ENCODE measurements at regions of chr6 and their contacts with region 1.

Region 1: DNA sequence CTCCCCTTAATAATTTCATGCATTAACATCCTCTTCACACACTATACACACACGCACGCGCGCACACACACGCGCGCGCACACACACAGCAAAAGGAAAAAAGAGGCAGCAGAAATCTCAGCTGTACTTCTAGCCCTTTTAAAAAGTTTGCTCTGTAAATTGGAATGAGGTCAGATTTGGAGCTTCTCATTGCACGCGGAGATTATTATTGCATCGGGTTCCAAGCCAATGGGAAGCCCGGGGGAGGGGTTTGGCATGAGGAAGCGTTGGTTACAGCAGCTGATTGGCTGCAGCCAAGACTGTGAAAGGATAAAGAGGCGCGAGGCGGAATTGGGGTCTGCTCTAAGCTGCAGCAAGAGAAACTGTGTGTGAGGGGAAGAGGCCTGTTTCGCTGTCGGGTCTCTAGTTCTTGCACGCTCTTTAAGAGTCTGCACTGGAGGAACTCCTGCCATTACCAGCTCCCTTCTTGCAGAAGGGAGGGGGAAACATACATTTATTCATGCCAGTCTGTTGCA is at the start of gene SOX4:
- DNase-seq: peak; percentile 87 to 97
- ATAC-seq: peak; percentile 79 to 90 (median 87)
- H3K4me3 ChIP-seq: peak within 1 kb of the TSS; percentile 62 to 88 (median 80)
- H3K27ac ChIP-seq: peak within 1 kb of the TSS; percentile 59 to 96 (median 90)
- H3K4me1 ChIP-seq: peaks cover 0 to 39% (median 15%) of the 10 kb centered on the region in 9 donors
- H3K27me3 ChIP-seq: no peaks in the 10 kb centered on the region
- CTCF ChIP-seq: no peak
- total RNA-seq, gene SOX4: 3.1 to 19.1 (median 7.7) TPM

Region 2: GRCh38 chr6:20564269-20564668 is 1029.2 kb before region 1 on chr6:
- intact Hi-C with region 1: loop called in 9 of 10 experiments (anchors 2 to 5 kb)
- DNase-seq: no peak
- ATAC-seq: no peak
- H3K4me3 ChIP-seq: no peak overlapping the region
- H3K27ac ChIP-seq: no peak overlapping the region
- H3K4me1 ChIP-seq: peaks cover 0 to 8% (median 5%) of the 10 kb centered on the region in 9 donors
- H3K27me3 ChIP-seq: no peaks in the 10 kb centered on the region
- CTCF ChIP-seq: peak; percentile 14 to 80 (median 70)

Region 3: GRCh38 chr6:20877008-20877937 is 716.2 kb before region 1 on chr6:
- intact Hi-C with region 1: loop called in 4 of 10 experiments (anchors 5 to 10 kb)
- DNase-seq: no peak
- ATAC-seq: peak in 7 of 8 donors; percentile 17 to 88 (median 74)
- H3K4me3 ChIP-seq: no peak overlapping the region
- H3K27ac ChIP-seq: peak overlapping the region in 1 of 10 donors; percentile 24
- H3K4me1 ChIP-seq: peaks cover 0 to 21% (median 0%) of the 10 kb centered on the region in 9 donors
- H3K27me3 ChIP-seq: no peaks in the 10 kb centered on the region
- CTCF ChIP-seq: no peak

Region 4: GRCh38 chr6:21748343-21749056 is 155.0 kb after region 1 on chr6:
- intact Hi-C with region 1: loop called in 1 of 10 experiments (anchors 10 kb)
- DNase-seq: no peak
- ATAC-seq: no peak
- H3K4me3 ChIP-seq: no peak overlapping the region
- H3K27ac ChIP-seq: no peak overlapping the region
- H3K4me1 ChIP-seq: peaks cover 0 to 5% (median 1%) of the 10 kb centered on the region in 9 donors
- H3K27me3 ChIP-seq: no peaks in the 10 kb centered on the region
- CTCF ChIP-seq: no peak

Region 5: DNA sequence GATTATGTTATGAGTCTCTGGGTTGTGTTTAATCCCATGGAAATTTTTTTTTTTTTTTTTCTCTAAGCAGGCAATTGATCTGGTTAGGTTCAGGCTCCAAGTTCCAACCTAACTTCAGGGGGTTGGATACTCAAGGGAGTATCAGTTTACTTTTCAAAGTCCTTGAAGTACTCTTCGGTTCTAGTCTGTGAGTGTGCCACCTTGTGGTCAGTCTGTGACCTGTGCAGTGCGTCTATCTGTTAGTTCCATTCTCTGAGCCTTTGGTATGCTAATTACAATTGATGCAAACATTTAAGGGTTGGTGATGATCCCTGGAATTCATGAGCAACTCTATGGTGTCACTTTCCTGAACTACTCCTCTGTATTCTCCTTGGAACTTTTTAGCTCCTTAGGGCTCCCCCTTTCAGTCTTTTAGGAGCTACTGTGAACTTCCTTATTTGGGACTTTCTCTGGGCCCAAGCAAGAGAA is 342.1 kb after region 1 on chr6:
- intact Hi-C with region 1: loop called in 7 of 10 experiments (anchors 5 to 10 kb)
- DNase-seq: peak in 1 of 2 donors; percentile 15
- ATAC-seq: peak in 3 of 8 donors; percentile 31 to 41 (median 31)
- H3K4me3 ChIP-seq: no peak overlapping the region
- H3K27ac ChIP-seq: no peak overlapping the region
- H3K4me1 ChIP-seq: peaks cover 0 to 5% (median 0%) of the 10 kb centered on the region in 9 donors
- H3K27me3 ChIP-seq: no peaks in the 10 kb centered on the region
- CTCF ChIP-seq: peak; percentile 15 to 70 (median 58)

Region 6: GRCh38 chr6:22737331-22737730 is 1143.9 kb after region 1 on chr6:
- intact Hi-C with region 1: loop called in 1 of 10 experiments (anchors 10 kb)
- DNase-seq: peak in 1 of 2 donors; percentile 24
- ATAC-seq: peak in 4 of 8 donors; percentile 42 to 68 (median 52)
- H3K4me3 ChIP-seq: no peak overlapping the region
- H3K27ac ChIP-seq: no peak overlapping the region
- H3K4me1 ChIP-seq: peaks cover 0 to 6% (median 0%) of the 10 kb centered on the region in 9 donors
- H3K27me3 ChIP-seq: no peaks in the 10 kb centered on the region
- CTCF ChIP-seq: peak; percentile 23 to 70 (median 55)

Region 7: GRCh38 chr6:23446394-23447046 is 1853.1 kb after region 1 on chr6:
- intact Hi-C with region 1: loop called in 3 of 10 experiments (anchors 5 to 10 kb)
- DNase-seq: peak in 1 of 2 donors; percentile 7
- ATAC-seq: peak in 7 of 8 donors; percentile 66 to 93 (median 78)
- H3K4me3 ChIP-seq: no peak overlapping the region
- H3K27ac ChIP-seq: peak overlapping the region in 6 of 10 donors; percentile 33 to 74 (median 60)
- H3K4me1 ChIP-seq: peaks cover 0 to 23% (median 15%) of the 10 kb centered on the region in 9 donors
- H3K27me3 ChIP-seq: no peaks in the 10 kb centered on the region
- CTCF ChIP-seq: peak; percentile 35 to 74 (median 58)